ENCODE measurements at regions of chr17 and their contacts with region 1.

Region 1: GRCh38 chr17:34398990-34399389 is 36.0 kb upstream of the CCL1 start:
- DNase-seq: no peak
- ATAC-seq: peak in 1 of 4 donors; percentile 7
- H3K4me3 ChIP-seq: no peak overlapping the region
- H3K27ac ChIP-seq: no peak overlapping the region
- H3K4me1 ChIP-seq: peaks cover 0 to 17% (median 0%) of the 10 kb centered on the region in 12 donors
- H3K27me3 ChIP-seq: peaks cover 0 to 29% (median 0%) of the 10 kb centered on the region in 9 donors
- CTCF ChIP-seq: no peak
- POLR2A ChIP-seq: no peak

Region 2: GRCh38 chr17:33914125-33914524 is 484.9 kb before region 1 on chr17:
- intact Hi-C with region 1: loop called in 1 of 10 experiments (anchors 10 kb)
- DNase-seq: no peak
- ATAC-seq: no peak
- H3K4me3 ChIP-seq: no peak overlapping the region
- H3K27ac ChIP-seq: no peak overlapping the region
- H3K4me1 ChIP-seq: no peaks in the 10 kb centered on the region
- H3K27me3 ChIP-seq: peaks cover 0 to 6% (median 0%) of the 10 kb centered on the region in 9 donors
- CTCF ChIP-seq: no peak
- POLR2A ChIP-seq: no peak